CD8-positive, alpha-beta T cell (primary cell): ENCODE measurements at regions of chr11 and their contacts with region 1.

Region 1: DNA sequence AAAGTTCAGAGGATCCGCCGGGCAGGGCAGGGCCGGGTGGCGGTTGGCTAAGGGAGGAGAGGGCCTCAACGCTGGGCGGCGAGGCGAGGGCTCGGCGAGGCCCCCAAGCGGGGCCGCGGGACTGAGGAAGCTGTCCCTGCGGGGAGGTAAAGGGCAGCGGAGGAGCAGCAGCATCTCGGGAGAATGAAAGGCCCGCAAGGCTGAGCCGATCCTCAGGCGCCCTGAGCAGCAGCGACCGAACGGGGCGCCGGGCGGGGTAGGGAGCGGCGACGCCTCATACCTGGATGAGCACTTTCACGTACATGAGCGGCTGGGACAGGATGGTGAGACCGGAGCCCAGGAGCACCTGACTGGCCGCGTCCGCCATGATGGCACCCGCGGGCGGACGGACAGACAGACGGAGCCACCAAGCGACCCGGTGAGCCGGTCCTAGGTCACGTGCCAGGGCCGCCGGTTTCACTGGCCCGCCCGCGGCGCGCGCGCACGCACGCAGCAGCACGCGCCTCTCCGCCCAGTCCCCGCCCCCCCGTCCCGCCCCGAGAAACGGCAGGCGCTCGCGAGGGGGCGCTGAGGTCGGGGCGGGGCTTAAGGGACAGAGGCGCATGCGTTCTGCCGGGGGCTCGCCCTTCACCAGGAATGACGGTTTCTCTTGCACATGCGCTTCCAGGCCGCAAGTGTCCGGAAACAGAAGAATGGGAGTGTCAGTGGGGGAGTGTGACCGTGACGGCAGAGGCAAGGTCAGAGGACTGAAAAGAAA is at the start of gene MTCH2:
- DNase-seq: peak; percentile 91 to 98 (median 95)
- ATAC-seq: peak; percentile 95
- H3K4me3 ChIP-seq: peak within 1 kb of the TSS; percentile 42 to 91
- H3K4me3 Mint-ChIP-seq: peak within 1 kb of the TSS; percentile 96
- H3K27ac ChIP-seq: peak within 1 kb of the TSS; percentile 55 to 96
- H3K27ac Mint-ChIP-seq: peak within 1 kb of the TSS; percentile 97
- H3K4me1 ChIP-seq: peaks cover 18% of the 10 kb centered on the region
- H3K4me1 Mint-ChIP-seq: peaks cover 32% of the 10 kb centered on the region
- H3K27me3 ChIP-seq: no peaks in the 10 kb centered on the region
- H3K27me3 Mint-ChIP-seq: no peaks in the 10 kb centered on the region
- CTCF ChIP-seq: no peak
- total RNA-seq, gene MTCH2: 16.4 to 19.5 TPM

Region 2: GRCh38 chr11:47213985-47214564 is 428.2 kb before region 1 on chr11:
- CTCF ChIA-PET with region 1: no interaction called
- POLR2A ChIA-PET with region 1: no interaction called
- intact Hi-C with region 1: loop called in 1 of 2 experiments (anchors 2 kb)
- DNase-seq: peak; percentile 64 to 90 (median 84)
- ATAC-seq: peak; percentile 67
- H3K4me3 ChIP-seq: peak overlapping the region; percentile 65 to 95
- H3K4me3 Mint-ChIP-seq: peak overlapping the region; percentile 96
- H3K27ac ChIP-seq: peak overlapping the region; percentile 85 to 93
- H3K27ac Mint-ChIP-seq: peak overlapping the region; percentile 97
- H3K4me1 ChIP-seq: peaks cover 16% of the 10 kb centered on the region
- H3K4me1 Mint-ChIP-seq: peaks cover 31% of the 10 kb centered on the region
- H3K27me3 ChIP-seq: no peaks in the 10 kb centered on the region
- H3K27me3 Mint-ChIP-seq: no peaks in the 10 kb centered on the region
- CTCF ChIP-seq: no peak

Region 3: DNA sequence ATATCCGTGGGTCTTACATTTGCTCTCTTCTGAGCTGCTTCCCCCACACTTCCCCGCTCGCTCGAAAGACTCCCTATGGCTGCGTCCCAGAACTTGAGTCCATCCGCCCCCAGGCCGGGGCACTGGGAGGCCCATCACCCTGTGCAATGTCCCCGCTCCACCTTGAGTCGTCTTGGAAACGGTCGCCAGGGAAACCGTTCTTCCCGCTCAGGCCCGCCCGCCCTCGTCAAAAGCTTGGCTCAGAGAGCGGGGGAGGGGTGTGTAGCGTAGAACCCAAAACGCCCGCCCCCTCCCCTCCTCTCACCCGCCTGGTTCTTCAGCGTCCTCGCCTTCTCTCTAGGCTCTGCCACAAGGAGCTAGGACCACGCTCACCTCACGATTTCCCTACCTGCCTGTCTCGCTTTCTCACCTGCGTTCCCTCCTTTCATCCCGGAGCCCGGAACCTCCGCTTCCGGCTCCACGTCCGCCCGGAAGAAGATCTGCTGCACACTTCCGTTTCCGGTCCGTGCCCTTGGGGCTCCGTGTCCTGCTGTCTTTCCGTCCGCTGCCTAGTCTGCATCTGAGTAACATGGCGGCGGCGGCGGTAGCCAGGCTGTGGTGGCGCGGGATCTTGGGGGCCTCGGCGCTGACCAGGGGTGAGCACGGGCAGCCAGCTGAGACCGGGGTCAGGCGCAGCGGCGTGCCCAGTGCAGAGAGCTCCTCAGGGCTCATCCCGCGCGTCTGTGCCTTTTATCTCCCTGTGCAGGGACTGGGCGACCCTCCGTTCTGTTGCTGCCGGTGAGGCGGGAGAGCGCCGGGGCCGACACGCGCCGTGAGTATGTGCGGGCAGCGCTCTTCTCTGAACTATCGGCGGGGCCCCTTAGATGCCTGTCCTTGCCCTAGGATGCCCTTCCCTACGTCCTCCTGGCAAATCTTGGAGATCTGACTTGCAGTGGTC is 63.5 kb before region 1 on chr11 and contains the starts of genes KBTBD4 and NDUFS3:
- CTCF ChIA-PET with region 1: interaction called, 3 read pairs
- POLR2A ChIA-PET with region 1: no interaction called
- intact Hi-C with region 1: loop called (anchors 1 kb)
- DNase-seq: peak; percentile 74 to 95 (median 89)
- ATAC-seq: peak; percentile 94
- H3K4me3 ChIP-seq: peak within 1 kb of the TSS; percentile 90 to 92
- H3K4me3 Mint-ChIP-seq: peak within 1 kb of the TSS; percentile 99
- H3K27ac ChIP-seq: peak within 1 kb of the TSS; percentile 76 to 84
- H3K27ac Mint-ChIP-seq: peak within 1 kb of the TSS; percentile 97
- H3K4me1 ChIP-seq: peaks cover 31% of the 10 kb centered on the region
- H3K4me1 Mint-ChIP-seq: peaks cover 54% of the 10 kb centered on the region
- H3K27me3 ChIP-seq: no peaks in the 10 kb centered on the region
- H3K27me3 Mint-ChIP-seq: no peaks in the 10 kb centered on the region
- CTCF ChIP-seq: no peak
- total RNA-seq, gene KBTBD4: 31.8 to 32.6 TPM
- total RNA-seq, gene NDUFS3: 159 to 179 TPM

Region 4: DNA sequence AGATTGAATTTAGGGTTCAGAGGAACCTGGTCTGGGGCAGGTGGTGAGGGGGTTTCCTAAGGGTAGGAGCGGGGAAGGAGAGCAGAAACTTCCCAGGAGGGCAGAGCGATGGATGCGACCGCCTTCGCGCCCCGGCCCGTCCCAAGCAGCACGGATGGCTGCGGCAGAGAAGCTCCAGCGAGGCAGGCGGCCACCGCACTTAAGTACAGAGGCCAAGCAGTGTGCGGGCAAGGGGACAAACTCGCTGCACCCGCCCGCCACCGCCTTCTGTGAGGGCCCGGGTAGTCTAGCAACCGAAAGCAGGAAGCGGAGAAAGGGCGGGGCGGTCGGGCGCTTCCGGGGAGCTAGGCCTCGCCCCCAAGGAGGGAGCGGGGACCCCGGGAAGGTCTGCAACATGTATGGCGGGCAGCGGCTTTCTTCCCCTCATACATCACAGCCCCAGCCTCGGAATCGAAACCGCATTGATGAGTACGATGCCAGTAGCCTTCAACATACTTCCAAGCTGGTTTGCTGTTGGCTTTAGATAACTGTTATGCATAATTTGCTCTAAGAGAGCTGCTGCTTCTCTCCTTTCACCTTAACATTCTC is 72.9 kb after region 1 on chr11 and contains the start of gene AGBL2:
- CTCF ChIA-PET with region 1: interaction called, 3 read pairs
- POLR2A ChIA-PET with region 1: interaction called, 3 read pairs
- intact Hi-C with region 1: loop called (anchors 1 kb)
- DNase-seq: peak; percentile 70 to 91 (median 86)
- ATAC-seq: peak; percentile 99
- H3K4me3 ChIP-seq: peak within 1 kb of the TSS; percentile 66 to 88
- H3K4me3 Mint-ChIP-seq: peak within 1 kb of the TSS; percentile 96
- H3K27ac ChIP-seq: peak within 1 kb of the TSS; percentile 81 to 88
- H3K27ac Mint-ChIP-seq: peak within 1 kb of the TSS; percentile 94
- H3K4me1 ChIP-seq: peaks cover 14% of the 10 kb centered on the region
- H3K4me1 Mint-ChIP-seq: peaks cover 21% of the 10 kb centered on the region
- H3K27me3 ChIP-seq: no peaks in the 10 kb centered on the region
- H3K27me3 Mint-ChIP-seq: no peaks in the 10 kb centered on the region
- CTCF ChIP-seq: no peak
- total RNA-seq, gene AGBL2: 3.6 to 5.0 TPM

Region 5: GRCh38 chr11:47750725-47751124 is 108.4 kb after region 1 on chr11:
- CTCF ChIA-PET with region 1: no interaction called
- POLR2A ChIA-PET with region 1: no interaction called
- intact Hi-C with region 1: no loop called
- DNase-seq: no peak
- ATAC-seq: no peak
- H3K4me3 ChIP-seq: no peak overlapping the region
- H3K4me3 Mint-ChIP-seq: no peak overlapping the region
- H3K27ac ChIP-seq: no peak overlapping the region
- H3K27ac Mint-ChIP-seq: no peak overlapping the region
- H3K4me1 ChIP-seq: no peaks in the 10 kb centered on the region
- H3K4me1 Mint-ChIP-seq: peaks cover 18% of the 10 kb centered on the region
- H3K27me3 ChIP-seq: no peaks in the 10 kb centered on the region
- H3K27me3 Mint-ChIP-seq: no peaks in the 10 kb centered on the region
- CTCF ChIP-seq: no peak

Region 6: GRCh38 chr11:47766305-47767227 is 124.3 kb after region 1 on chr11:
- CTCF ChIA-PET with region 1: no interaction called
- POLR2A ChIA-PET with region 1: no interaction called
- intact Hi-C with region 1: loop called in 1 of 2 experiments (anchors 1 kb)
- DNase-seq: peak; percentile 48 to 90 (median 74)
- ATAC-seq: peak; percentile 33
- H3K4me3 ChIP-seq: peak overlapping the region; percentile 75 to 79
- H3K4me3 Mint-ChIP-seq: peak overlapping the region; percentile 94
- H3K27ac ChIP-seq: peak overlapping the region; percentile 91 to 97
- H3K27ac Mint-ChIP-seq: peak overlapping the region; percentile 100
- H3K4me1 ChIP-seq: peaks cover 29% of the 10 kb centered on the region
- H3K4me1 Mint-ChIP-seq: peaks cover 31% of the 10 kb centered on the region
- H3K27me3 ChIP-seq: no peaks in the 10 kb centered on the region
- H3K27me3 Mint-ChIP-seq: no peaks in the 10 kb centered on the region
- CTCF ChIP-seq: no peak

Region 7: DNA sequence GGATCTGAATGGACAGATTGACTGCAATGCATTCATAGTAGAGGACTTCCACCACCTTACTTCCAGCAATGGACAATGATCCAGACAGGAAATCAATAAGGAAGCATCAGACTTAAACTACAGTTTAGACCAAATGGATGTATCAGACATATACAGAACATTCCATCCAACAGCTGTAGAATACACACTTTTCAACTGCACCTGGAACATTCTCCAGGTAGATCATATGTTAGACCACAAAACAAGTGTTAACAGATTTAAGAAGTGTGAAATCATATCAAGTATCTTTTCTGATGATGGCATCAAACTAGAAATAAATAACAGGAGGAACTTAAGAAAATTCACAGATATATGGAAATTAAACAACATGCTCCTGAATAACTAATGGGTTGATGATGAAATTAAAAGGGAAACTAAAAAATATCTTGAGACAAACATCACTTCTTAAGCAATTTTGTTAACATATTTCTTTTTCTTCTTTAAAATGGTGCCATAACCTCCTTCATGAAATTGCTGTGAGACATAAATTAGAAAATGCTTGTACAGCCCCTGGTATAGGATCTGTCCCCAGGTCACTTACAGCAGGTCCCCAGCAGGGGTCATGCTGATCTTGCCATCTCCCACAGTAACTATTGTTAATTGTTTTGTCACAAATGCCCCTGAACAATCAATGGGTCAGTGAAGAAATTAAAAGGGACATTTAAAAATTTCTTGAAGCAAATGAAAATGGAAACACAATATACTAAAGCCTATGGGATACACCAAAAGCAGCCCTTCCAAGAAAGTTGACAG is 474.4 kb after region 1 on chr11:
- CTCF ChIA-PET with region 1: no interaction called
- POLR2A ChIA-PET with region 1: no interaction called
- intact Hi-C with region 1: loop called in 1 of 2 experiments (anchors 10 kb)
- DNase-seq: peak in 2 of 9 experiments; percentile 13 to 24
- ATAC-seq: peak; percentile 29
- H3K4me3 ChIP-seq: no peak overlapping the region
- H3K4me3 Mint-ChIP-seq: no peak overlapping the region
- H3K27ac ChIP-seq: no peak overlapping the region
- H3K27ac Mint-ChIP-seq: no peak overlapping the region
- H3K4me1 ChIP-seq: no peaks in the 10 kb centered on the region
- H3K4me1 Mint-ChIP-seq: no peaks in the 10 kb centered on the region
- H3K27me3 ChIP-seq: no peaks in the 10 kb centered on the region
- H3K27me3 Mint-ChIP-seq: no peaks in the 10 kb centered on the region
- CTCF ChIP-seq: peak; percentile 37